ENCODE measurements at regions of chr15 and their contacts with region 1.

Region 1: DNA sequence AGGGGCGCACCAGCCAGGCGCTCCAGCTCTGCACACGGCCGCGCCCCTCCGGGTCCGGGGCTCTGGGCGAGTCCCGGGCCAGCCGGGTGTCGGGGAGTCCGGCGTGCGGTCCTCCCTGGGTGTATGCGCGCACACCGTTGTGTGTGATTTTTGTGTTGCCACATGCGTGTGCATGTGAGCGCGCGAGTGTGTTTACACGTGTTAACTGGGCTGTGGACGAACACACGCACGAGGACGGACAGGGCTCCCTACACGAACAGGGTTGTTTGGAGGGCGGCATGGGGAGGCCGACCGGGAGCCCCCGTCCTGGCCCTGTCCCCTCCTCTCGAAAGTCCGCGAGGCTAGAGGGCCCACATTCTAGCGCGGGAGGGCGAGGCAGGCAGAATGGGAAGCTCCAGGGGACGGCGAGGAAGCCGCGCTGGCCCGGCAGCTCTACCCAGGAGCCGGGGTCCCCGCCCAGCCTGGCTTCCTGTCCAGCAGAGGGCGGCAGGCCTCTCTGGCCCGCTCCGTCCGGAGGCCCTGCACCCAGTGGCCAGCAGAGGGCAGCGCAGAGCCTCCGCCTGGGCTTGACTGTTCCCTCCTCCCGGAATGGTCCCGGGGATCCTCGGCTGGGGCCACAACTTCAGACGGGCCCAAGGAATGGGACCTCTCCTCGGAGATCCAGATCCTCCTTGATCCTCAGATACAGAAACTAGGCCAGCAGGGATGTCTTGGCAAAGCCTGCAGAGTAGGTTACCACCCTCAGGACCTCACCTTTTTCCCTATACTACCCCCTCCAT is 611 bp upstream of the LINGO1 start:
- DNase-seq: peak; percentile 16 to 67 (median 36)
- ATAC-seq: peak; percentile 43
- H3K4me3 ChIP-seq: peak overlapping the region; percentile 33
- H3K4me3 Mint-ChIP-seq: peak overlapping the region; percentile 54
- H3K27ac ChIP-seq: no peak overlapping the region
- H3K27ac Mint-ChIP-seq: no peak overlapping the region
- H3K4me1 ChIP-seq: peaks cover 21% of the 10 kb centered on the region
- H3K4me1 Mint-ChIP-seq: peaks cover 15% of the 10 kb centered on the region
- H3K27me3 ChIP-seq: peaks cover 47 to 69% of the 10 kb centered on the region in 2 experiments
- H3K27me3 Mint-ChIP-seq: peaks cover 55% of the 10 kb centered on the region
- CTCF ChIP-seq: peak; percentile 82

Region 2: DNA sequence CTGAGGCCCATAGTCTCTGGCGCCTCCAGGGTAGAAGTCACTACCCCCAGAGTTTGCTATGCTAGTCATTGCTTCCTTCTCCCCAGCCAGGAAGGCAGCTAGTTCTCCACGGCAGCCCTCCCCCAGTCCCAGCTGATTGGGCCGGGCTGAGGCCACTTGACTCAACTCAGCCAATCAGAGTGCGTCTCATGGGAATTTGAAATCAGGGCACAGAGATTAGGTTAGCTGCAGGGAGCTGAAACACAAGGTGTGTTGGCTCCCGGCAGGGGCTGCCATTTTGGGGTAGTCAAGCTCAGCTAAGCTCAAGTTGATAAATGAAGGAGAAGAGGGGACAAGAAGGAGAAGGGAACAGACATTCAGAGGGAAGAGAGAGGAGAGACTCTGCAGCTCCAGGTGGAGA is 33.4 kb before region 1 on chr15:
- CTCF ChIA-PET with region 1: no interaction called
- POLR2A ChIA-PET with region 1: no interaction called
- intact Hi-C with region 1: no loop called
- DNase-seq: no peak
- ATAC-seq: no peak
- H3K4me3 ChIP-seq: no peak overlapping the region
- H3K4me3 Mint-ChIP-seq: no peak overlapping the region
- H3K27ac ChIP-seq: no peak overlapping the region
- H3K27ac Mint-ChIP-seq: no peak overlapping the region
- H3K4me1 ChIP-seq: no peaks in the 10 kb centered on the region
- H3K4me1 Mint-ChIP-seq: peaks cover 3% of the 10 kb centered on the region
- H3K27me3 ChIP-seq: no peaks in the 10 kb centered on the region
- H3K27me3 Mint-ChIP-seq: peaks cover 4% of the 10 kb centered on the region
- CTCF ChIP-seq: no peak

Region 3: DNA sequence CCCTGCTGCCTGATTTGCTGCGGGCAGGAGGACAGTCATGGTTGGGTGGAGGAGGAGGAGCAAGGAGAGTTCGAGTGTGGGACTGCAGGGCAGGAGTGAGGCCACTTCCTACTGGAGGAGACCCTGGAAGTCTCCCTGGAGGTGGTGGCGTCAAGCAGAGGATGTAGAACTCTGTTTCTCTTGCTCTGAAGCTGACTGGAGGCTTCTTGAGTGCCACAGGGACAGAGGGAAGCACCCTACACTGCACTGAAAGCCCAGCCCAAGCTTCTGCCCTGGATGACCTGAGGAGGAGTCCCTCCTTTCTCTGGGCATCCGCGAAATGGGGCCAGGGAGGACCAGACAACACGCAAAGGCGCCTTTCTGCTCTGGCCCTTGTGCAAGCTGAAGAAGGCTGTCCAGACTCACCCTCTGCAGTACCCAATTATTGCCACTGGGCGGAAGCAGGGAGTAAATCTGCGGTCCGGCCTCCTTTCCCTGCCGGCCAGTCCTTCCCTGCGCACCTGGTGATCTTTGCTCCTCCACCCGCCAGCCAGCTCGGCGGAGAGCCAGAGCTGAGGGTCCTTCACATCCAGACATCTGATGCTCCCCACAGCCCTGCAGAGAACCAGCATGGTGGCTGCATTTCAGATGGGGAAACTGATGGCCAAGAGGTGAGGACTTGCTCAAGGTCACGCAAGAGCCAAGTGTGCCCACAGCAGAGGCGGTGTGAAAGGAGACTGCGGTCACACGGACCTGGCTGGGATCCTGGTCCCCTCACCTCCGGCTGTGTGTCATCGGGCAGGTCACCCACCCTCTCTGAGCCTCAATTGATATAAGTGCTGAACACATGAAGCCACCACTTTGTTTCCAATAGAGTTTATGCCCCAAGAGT is 237.1 kb after region 1 on chr15:
- CTCF ChIA-PET with region 1: no interaction called
- POLR2A ChIA-PET with region 1: no interaction called
- intact Hi-C with region 1: loop called in 1 of 2 experiments (anchors 10 kb)
- DNase-seq: peak in 11 of 14 experiments; percentile 3 to 51 (median 25)
- ATAC-seq: no peak
- H3K4me3 ChIP-seq: no peak overlapping the region
- H3K4me3 Mint-ChIP-seq: no peak overlapping the region
- H3K27ac ChIP-seq: no peak overlapping the region
- H3K27ac Mint-ChIP-seq: no peak overlapping the region
- H3K4me1 ChIP-seq: peaks cover 5% of the 10 kb centered on the region
- H3K4me1 Mint-ChIP-seq: no peaks in the 10 kb centered on the region
- H3K27me3 ChIP-seq: no peaks in the 10 kb centered on the region
- H3K27me3 Mint-ChIP-seq: no peaks in the 10 kb centered on the region
- CTCF ChIP-seq: peak; percentile 35

Measured in CD4-positive, alpha-beta T cell (primary cell).